Activated T-helper 2 cell treated with anti-CD3 and anti-CD28 coated beads, Interferon-gamma antibody, Interleukin-2, Interleukin-4, amounts not matched to agents 10 μg/mL and 5 μg/mL and 100 μg/mL, durations not matched to agents 14 hours and 24 hours and 36 hours (primary cell): ENCODE measurements at regions of chr6 and their contacts with region 1.

Region 1: DNA sequence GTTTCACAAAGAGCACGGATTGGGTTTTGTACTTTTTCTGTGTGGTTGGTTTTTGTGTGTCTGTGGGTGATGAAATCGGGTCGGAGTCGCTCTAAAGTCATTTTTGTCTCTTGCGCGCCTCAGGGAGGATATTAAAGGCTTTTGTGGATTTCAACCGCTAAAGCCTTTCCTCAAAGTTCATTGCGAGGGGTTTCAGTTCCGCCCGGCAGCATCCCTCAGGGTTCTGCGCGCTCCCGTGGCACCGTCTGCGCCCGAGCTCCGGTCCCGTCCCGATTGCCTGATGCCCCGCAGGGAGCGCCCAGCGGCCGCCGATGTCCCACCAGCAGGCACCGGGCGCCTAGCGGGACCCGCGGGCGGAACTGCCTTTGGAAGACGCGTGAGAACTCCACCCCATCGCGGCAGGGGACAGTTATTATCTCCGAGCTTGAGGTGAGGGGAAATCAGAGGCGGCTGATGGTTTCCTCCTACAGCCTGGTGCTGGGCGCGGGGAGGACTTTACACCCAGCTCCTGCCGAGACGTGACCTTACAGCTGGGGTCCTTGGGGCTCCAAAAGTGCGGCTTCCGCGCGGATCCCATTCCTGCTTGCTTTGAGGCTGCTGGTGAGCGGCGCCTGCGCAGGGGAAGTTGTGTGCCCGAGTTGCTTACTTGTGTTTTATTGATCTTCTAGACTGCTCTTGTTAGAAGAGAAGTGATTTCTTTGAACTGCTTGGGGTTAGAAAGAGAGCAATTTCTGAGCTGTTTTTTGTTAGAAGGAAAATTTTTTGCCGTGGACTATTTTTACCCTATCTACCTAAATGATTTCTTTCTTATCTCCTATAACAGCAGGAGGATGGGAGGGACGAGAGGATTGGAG is 27.1 kb downstream of the ULBP1 start:
- DNase-seq: no peak
- H3K4me3 Mint-ChIP-seq: peak overlapping the region; percentile 79
- H3K27ac Mint-ChIP-seq: no peak overlapping the region
- H3K4me1 Mint-ChIP-seq: peaks cover 29% of the 10 kb centered on the region
- H3K27me3 Mint-ChIP-seq: peaks cover 91% of the 10 kb centered on the region

Region 2: DNA sequence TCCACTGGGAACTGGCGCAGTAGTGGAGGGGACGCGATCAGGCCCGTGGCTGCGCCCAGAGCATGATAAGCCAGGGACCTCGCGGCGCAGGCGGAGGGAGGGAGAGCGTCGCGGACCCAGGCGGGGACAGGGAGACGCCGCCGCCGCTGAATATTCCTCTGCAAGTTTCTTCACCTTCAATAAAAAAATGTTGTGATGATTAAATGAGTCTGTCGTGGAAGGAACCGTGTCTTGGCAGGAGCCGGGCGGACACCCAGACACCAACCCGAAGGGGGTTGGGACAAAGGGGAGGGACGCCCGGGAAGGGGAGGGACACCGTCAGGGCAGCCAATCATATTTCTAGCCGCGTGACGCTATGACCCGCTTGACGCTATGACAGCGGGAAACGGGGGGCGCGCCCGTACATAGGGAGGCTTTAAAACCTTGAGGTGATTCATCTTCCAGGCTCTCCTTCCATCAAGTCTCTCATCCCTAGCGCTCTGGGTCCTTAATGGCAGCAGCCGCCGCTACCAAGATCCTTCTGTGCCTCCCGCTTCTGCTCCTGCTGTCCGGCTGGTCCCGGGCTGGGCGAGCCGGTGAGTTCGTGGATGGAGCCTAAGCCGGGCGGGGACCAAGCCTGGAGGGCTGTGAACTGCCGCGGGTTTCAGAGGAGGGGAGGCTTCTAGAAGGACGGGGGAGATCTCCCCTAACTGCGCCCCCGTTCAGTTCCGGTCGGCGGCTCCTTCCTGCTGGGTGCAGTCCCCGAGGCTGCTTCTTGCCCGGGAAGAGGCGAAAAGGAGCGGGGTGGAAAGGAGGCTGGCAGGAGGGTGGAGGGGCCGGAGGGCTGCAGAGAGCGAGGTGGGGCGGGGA is 49.0 kb before region 1 on chr6 and contains the start of gene ULBP2:
- intact Hi-C with region 1: loop called (anchors 2 kb)
- DNase-seq: peak; percentile 78
- H3K4me3 Mint-ChIP-seq: peak within 1 kb of the TSS; percentile 91
- H3K27ac Mint-ChIP-seq: peak within 1 kb of the TSS; percentile 55
- H3K4me1 Mint-ChIP-seq: peaks cover 21% of the 10 kb centered on the region
- H3K27me3 Mint-ChIP-seq: peaks cover 69% of the 10 kb centered on the region
- total RNA-seq, gene ULBP2: 0.14 and 0.18 TPM in 2 replicates

Region 3: GRCh38 chr6:150016324-150017185 is 25.7 kb after region 1 on chr6:
- intact Hi-C with region 1: loop called (anchors 2 kb)
- DNase-seq: peak; percentile 33
- H3K4me3 Mint-ChIP-seq: no peak overlapping the region
- H3K27ac Mint-ChIP-seq: no peak overlapping the region
- H3K4me1 Mint-ChIP-seq: peaks cover 17% of the 10 kb centered on the region
- H3K27me3 Mint-ChIP-seq: peaks cover 75% of the 10 kb centered on the region